ENCODE measurements at regions of chr5 and their contacts with region 1.

Region 1: GRCh38 chr5:71782771-71783770 is 64.0 kb downstream of the CARTPT start:
- DNase-seq: peak; percentile 85
- H3K4me3 Mint-ChIP-seq: peak overlapping the region; percentile 48
- H3K27ac Mint-ChIP-seq: peak overlapping the region; percentile 43
- H3K4me1 Mint-ChIP-seq: peaks cover 24% of the 10 kb centered on the region
- H3K27me3 Mint-ChIP-seq: peaks cover 4% of the 10 kb centered on the region

Region 2: GRCh38 chr5:71757590-71758543 is 25.2 kb before region 1 on chr5:
- CTCF ChIA-PET with region 1: no interaction called
- POLR2A ChIA-PET with region 1: no interaction called
- intact Hi-C with region 1: no loop called
- DNase-seq: peak; percentile 71
- H3K4me3 Mint-ChIP-seq: no peak overlapping the region
- H3K27ac Mint-ChIP-seq: no peak overlapping the region
- H3K4me1 Mint-ChIP-seq: peaks cover 6% of the 10 kb centered on the region
- H3K27me3 Mint-ChIP-seq: no peaks in the 10 kb centered on the region

Region 3: DNA sequence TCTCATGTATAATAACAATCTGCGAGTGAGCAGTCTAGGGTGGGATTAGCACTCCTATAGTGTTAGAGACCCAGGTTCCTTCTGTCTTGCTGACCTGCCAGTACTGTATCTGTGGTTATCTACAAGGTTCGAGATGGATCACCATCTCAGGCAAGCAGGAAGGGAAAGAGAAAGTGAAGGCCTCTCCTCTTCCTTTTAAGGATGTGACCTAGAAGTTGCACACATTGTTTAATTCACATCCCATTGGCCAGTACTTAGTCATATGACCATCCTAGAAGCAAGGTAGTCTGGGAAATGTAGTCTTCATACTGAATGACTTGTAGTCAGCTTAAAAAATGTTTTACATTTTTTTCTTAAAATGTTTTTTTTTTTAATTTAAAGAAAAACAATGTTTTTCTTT is 104.6 kb after region 1 on chr5:
- CTCF ChIA-PET with region 1: no interaction called
- POLR2A ChIA-PET with region 1: no interaction called
- intact Hi-C with region 1: loop called (anchors 5 kb)
- DNase-seq: no peak
- H3K4me3 Mint-ChIP-seq: peak overlapping the region; percentile 24
- H3K27ac Mint-ChIP-seq: no peak overlapping the region
- H3K4me1 Mint-ChIP-seq: no peaks in the 10 kb centered on the region
- H3K27me3 Mint-ChIP-seq: peaks cover 20% of the 10 kb centered on the region

Region 4: DNA sequence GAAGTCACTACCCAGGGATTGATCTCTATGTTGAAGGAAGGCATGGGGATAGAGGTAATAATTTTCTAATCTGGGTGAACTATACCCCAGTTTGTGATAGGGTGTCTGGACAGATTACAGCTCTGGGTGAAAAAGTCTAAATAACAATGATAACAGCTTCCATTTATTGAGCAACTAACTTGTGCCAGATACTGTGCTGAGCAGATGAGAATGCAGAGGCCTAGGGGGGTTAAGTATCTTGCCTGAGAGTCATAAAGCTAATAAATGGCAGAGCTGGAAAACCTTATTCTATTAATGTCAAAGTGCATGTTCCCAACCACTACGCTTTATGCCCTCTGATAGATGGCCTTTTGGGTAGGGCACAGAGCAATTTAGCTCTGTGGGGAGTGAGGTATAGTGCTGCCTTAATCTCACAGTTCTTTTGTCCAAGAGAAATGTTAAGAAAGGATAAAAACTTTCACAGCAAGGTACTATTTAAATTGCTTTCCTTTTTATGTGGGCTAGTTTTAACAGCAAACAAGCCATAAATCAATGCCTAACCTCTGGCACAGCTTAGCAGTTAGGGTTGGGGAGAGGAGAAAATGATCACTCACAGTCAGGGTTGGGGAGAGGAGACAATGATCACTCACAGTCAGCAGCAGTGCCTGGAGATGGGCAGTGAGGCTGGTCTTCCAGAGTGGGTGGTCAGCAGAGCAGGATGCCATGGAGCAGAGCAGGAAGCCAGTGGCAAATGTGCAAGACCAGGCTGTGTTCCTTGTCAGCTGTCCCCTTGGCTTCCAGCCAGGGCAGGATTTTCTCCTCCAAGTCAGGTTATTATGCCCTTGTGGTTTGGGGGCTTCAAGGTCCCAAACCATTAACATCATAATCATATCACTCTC is 123.0 kb after region 1 on chr5:
- CTCF ChIA-PET with region 1: no interaction called
- POLR2A ChIA-PET with region 1: no interaction called
- intact Hi-C with region 1: no loop called
- DNase-seq: no peak
- H3K4me3 Mint-ChIP-seq: no peak overlapping the region
- H3K27ac Mint-ChIP-seq: no peak overlapping the region
- H3K4me1 Mint-ChIP-seq: no peaks in the 10 kb centered on the region
- H3K27me3 Mint-ChIP-seq: peaks cover 7% of the 10 kb centered on the region

Region 5: GRCh38 chr5:72018146-72018803 is 235.2 kb after region 1 on chr5:
- CTCF ChIA-PET with region 1: interaction called, 4 read pairs
- POLR2A ChIA-PET with region 1: no interaction called
- intact Hi-C with region 1: loop called (anchors 1 kb)
- DNase-seq: peak; percentile 75
- H3K4me3 Mint-ChIP-seq: no peak overlapping the region
- H3K27ac Mint-ChIP-seq: no peak overlapping the region
- H3K4me1 Mint-ChIP-seq: peaks cover 6% of the 10 kb centered on the region
- H3K27me3 Mint-ChIP-seq: peaks cover 18% of the 10 kb centered on the region

Region 6: GRCh38 chr5:72307968-72308852 is 525.1 kb after region 1 on chr5:
- CTCF ChIA-PET with region 1: interaction called, 9 read pairs
- POLR2A ChIA-PET with region 1: no interaction called
- intact Hi-C with region 1: loop called (anchors 5 kb)
- DNase-seq: peak; percentile 97
- H3K4me3 Mint-ChIP-seq: peak overlapping the region; percentile 89
- H3K27ac Mint-ChIP-seq: peak overlapping the region; percentile 87
- H3K4me1 Mint-ChIP-seq: peaks cover 23% of the 10 kb centered on the region
- H3K27me3 Mint-ChIP-seq: no peaks in the 10 kb centered on the region

Measured in activated CD4-positive, alpha-beta memory T cell treated with anti-CD3 and anti-CD28 coated beads for 36 hours (primary cell).